ENCODE measurements at regions of chr11 and their contacts with region 1.

Region 1: GRCh38 chr11:13335319-13335718 is 57.7 kb downstream of the BMAL1 start:
- DNase-seq: peak; percentile 69
- CTCF ChIP-seq: peak; percentile 80

Region 2: GRCh38 chr11:13210424-13210823 is 124.9 kb before region 1 on chr11:
- in situ Hi-C with region 1: loop called (anchors 10 kb)
- DNase-seq: no peak
- CTCF ChIP-seq: peak; percentile 38

Region 3: GRCh38 chr11:13550761-13551160 is 215.4 kb after region 1 on chr11:
- in situ Hi-C with region 1: no loop called
- DNase-seq: no peak
- CTCF ChIP-seq: no peak